Posterior vena cava (tissue), 2 donors: ENCODE measurements at regions of chr15 and their contacts with region 1.

Region 1: DNA sequence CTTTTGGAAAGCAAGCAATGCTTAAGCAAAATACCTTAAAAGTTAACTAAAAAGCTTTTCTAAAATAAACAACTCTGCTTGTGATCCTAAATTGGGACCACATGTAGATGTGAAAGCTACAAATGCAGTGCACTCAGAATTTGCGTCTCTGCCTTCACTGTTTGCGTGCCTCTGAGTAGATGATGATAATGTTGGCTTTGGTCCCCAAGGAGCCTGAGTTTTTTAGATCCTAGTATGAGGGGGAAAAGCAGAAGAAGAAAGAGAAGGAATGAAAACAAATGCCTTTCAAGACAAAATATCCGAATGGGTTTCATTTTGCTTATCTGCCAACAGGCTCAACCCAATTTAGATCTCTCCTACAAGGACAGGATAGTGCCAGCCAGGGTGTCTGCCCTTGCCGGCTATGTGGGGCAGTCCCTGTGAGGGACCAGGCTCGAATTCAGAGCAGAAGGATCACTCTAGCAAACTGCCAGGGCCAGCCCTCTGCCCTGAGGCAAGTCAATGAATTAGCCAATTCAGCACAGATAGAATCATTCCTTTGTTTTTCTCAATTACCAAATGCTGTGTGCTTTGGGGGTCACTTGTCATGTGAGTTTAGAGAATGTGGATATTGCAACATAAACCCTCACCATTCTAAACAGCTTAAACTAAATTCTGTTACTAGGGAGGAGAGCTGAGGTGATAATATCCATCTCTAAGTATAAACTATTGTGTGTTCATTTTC is 28.5 kb downstream of the SCG5 start:
- DNase-seq: no peak

Region 2: DNA sequence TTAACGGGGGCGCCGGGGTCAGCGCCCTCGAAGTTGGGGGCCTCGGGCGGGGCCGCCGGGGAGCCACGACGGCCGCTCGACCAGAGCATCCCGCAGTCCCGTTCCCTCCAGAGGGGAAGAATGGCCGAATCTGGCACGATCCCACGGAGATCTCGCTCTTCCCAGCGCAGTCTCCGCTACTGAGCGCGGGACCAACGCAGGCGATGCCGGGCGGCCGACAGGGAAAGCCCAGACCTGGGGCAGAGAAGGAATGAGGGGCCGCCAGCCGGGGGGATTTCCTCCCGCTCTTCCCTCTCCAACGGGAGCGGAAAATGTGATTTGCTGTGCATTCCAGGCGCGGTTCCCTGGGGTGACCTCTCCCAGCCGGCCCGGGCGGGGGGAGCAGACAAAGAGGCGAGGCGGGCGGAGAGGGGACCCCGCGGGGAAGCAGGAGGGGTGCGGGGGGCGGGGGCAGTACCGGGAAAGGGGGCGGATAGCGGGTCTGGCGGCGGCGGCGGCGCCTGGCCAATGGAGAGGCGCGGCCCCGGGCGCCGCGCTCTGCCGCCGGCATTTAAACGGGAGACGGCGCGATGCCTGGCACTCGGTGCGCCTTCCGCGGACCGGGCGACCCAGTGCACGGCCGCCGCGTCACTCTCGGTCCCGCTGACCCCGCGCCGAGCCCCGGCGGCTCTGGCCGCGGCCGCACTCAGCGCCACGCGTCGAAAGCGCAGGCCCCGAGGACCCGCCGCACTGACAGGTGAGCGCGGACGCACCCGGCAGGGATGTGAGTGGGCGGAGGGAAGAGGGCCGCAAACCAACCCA is 47.6 kb after region 1 on chr15 and contains the start of gene GREM1:
- intact Hi-C with region 1: loop called in 1 of 2 experiments (anchors 5 kb)
- DNase-seq: no peak
- total RNA-seq, gene GREM1: 283 to 825 TPM

Region 3: DNA sequence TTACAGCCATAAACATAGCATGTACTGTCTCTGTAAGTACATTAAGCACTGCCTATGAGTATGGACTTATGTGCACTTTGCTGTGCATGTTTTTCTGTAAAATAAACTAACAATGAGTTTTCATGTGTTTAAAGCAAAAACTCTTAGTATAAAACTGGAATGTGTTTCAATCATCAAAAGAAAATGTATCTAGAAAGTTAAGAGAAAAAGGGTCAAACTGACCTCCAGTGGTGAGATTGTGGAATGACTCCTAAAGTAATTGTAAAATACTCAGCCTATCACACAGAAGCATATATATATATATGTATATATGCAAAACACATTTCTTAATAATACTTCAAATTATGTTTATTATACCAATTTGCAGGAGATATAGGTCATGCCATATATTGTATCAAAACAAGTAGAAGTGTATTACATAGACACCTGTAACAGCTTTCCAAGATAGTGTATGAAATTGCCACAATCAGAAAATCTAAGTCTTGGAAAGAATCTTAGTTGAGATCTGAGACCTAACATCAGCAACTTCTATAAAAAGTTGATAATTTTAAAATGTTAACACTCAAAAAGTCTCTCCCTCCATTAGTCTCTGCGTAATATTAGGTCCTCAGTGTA is 324.9 kb after region 1 on chr15:
- intact Hi-C with region 1: loop called in 1 of 2 experiments (anchors 5 kb)
- DNase-seq: no peak